ENCODE measurements at regions of chr5 and their contacts with region 1.

Region 1: DNA sequence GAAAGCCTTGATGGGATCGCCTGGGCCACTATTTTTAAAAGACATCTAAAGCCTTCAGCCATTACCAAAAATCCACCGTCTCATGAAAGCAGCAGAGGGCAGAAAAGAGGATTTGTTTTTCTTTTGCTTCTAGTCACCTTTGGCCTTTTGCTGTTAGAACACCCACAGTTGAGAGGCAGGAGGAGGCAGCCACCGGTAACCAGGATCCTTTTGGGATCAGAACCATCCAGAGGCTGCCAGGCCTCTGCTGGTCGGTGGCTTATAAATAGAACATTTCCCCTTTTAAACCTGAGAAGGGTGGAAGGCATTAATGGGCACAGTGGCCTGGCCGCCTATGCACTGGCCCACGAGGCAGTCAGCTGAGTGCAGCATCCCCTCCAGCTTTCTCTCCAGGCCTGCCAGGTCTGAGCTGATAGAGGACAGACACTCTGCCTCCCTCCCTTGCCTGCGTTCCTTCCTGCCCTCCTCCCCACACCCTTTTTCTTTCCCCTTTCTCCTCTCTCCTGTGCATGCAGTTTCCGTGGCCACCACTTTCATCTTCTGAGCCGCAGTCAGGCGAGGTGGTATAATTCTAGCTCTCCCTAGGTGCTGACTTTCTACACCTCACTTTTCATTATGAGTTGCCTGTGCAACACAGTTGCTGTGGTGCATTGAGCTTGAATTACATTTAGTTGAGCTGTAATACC is 253.4 kb downstream of the ARHGAP26 start:
- DNase-seq: peak; percentile 41
- H3K4me3 Mint-ChIP-seq: no peak overlapping the region
- H3K27ac Mint-ChIP-seq: peak overlapping the region; percentile 45
- H3K4me1 Mint-ChIP-seq: peaks cover 55% of the 10 kb centered on the region
- H3K27me3 Mint-ChIP-seq: no peaks in the 10 kb centered on the region

Region 2: DNA sequence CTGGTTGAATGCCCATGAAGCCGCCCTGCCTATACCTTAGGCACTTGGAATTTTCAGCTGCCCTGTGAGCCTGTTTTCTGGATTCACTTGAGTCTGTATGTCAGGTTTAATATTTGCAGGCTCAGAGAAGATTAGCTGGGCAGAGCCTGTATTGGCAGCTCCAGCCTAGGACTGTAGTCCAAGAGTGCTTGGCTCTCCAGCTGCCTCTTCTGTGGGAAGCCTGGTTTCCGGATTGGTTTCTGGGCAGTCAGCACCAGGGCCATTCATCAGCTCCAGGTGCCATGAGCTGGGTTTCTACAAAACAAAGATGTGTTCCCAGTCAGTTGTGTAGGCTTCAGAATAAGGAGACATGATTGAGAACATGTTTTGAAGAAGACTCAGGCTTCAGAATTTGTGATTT is 163.3 kb before region 1 on chr5:
- intact Hi-C with region 1: no loop called
- DNase-seq: no peak
- H3K4me3 Mint-ChIP-seq: no peak overlapping the region
- H3K27ac Mint-ChIP-seq: no peak overlapping the region
- H3K4me1 Mint-ChIP-seq: peaks cover 19% of the 10 kb centered on the region
- H3K27me3 Mint-ChIP-seq: no peaks in the 10 kb centered on the region

Region 3: GRCh38 chr5:142955628-142956027 is 67.9 kb before region 1 on chr5:
- intact Hi-C with region 1: no loop called
- DNase-seq: no peak
- H3K4me3 Mint-ChIP-seq: no peak overlapping the region
- H3K27ac Mint-ChIP-seq: no peak overlapping the region
- H3K4me1 Mint-ChIP-seq: peaks cover 20% of the 10 kb centered on the region
- H3K27me3 Mint-ChIP-seq: no peaks in the 10 kb centered on the region

Region 4: GRCh38 chr5:143057580-143057999 is 34.0 kb after region 1 on chr5:
- intact Hi-C with region 1: loop called (anchors 5 kb)
- DNase-seq: no peak
- H3K4me3 Mint-ChIP-seq: no peak overlapping the region
- H3K27ac Mint-ChIP-seq: peak overlapping the region; percentile 96
- H3K4me1 Mint-ChIP-seq: peaks cover 67% of the 10 kb centered on the region
- H3K27me3 Mint-ChIP-seq: no peaks in the 10 kb centered on the region

Measured in activated T-helper 2 cell treated with anti-CD3 and anti-CD28 coated beads, Interferon-gamma antibody, Interleukin-2, Interleukin-4, amounts not matched to agents 10 μg/mL and 5 μg/mL and 100 μg/mL, durations not matched to agents 14 hours and 24 hours and 36 hours (primary cell).